ENCODE measurements at regions of chr10 and their contacts with region 1.

Region 1: GRCh38 chr10:63227207-63227915 is 94.2 kb downstream of the NRBF2 start:
- DNase-seq: no peak
- H3K4me3 Mint-ChIP-seq: no peak overlapping the region
- H3K27ac Mint-ChIP-seq: peak overlapping the region; percentile 97
- H3K4me1 Mint-ChIP-seq: peaks cover 56% of the 10 kb centered on the region
- H3K27me3 Mint-ChIP-seq: no peaks in the 10 kb centered on the region

Region 2: DNA sequence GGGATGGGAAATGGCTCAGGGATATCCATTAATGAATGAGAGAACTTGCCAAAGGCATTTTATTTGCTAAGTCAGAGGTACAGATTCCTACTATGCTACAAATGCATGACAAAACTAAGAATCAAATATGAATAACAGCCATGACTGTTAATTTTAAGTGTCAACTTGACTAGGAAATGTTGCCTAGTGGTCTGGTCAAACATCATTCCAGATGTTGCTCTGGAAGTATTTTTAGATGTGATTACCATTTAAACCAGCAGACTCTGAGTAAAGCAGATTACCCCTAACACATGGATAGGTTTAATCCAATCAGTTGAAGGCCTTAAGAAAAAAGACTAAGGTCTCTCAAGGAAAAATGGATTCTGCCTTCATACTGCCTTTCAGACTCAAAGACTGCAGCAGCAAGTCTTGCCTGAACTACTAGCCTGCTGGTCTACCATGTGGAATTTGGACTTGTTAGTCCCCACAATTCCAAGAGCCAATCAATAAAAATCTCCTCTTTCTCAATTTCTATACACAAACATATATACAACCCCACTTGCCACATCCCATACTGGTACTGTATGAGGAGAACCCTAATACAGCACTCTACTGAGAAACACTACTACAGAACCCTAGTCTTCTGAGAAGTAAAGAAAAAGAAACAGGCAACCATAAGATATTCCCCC is 24.9 kb after region 1 on chr10:
- CTCF ChIA-PET with region 1: no interaction called
- intact Hi-C with region 1: no loop called
- DNase-seq: no peak
- H3K4me3 Mint-ChIP-seq: no peak overlapping the region
- H3K27ac Mint-ChIP-seq: no peak overlapping the region
- H3K4me1 Mint-ChIP-seq: peaks cover 56% of the 10 kb centered on the region
- H3K27me3 Mint-ChIP-seq: no peaks in the 10 kb centered on the region

Region 3: GRCh38 chr10:63355682-63356081 is 128.3 kb after region 1 on chr10:
- CTCF ChIA-PET with region 1: no interaction called
- intact Hi-C with region 1: loop called (anchors 2 kb)
- DNase-seq: no peak
- H3K4me3 Mint-ChIP-seq: no peak overlapping the region
- H3K27ac Mint-ChIP-seq: no peak overlapping the region
- H3K4me1 Mint-ChIP-seq: peaks cover 28% of the 10 kb centered on the region
- H3K27me3 Mint-ChIP-seq: no peaks in the 10 kb centered on the region

Measured in activated naive CD4-positive, alpha-beta T cell treated with anti-CD3 and anti-CD28 coated beads for 36 hours (primary cell).